ENCODE measurements at regions of chr7 and their contacts with region 1.

Region 1: GRCh38 chr7:83648464-83649241 is at the start of gene SEMA3E:
- DNase-seq: peak; percentile 52
- ATAC-seq: peak; percentile 82
- H3K4me3 ChIP-seq: peak within 1 kb of the TSS; percentile 75
- H3K27ac ChIP-seq: peak within 1 kb of the TSS; percentile 20; the same call in 1 of the 2 replicates
- H3K4me1 ChIP-seq: peaks cover 17% of the 10 kb centered on the region
- H3K27me3 ChIP-seq: no peaks in the 10 kb centered on the region
- CTCF ChIP-seq: peak; percentile 22; the same call in 1 of the 2 replicates
- total RNA-seq, gene SEMA3E: 3.6 and 5.9 TPM in 2 replicates

Region 2: DNA sequence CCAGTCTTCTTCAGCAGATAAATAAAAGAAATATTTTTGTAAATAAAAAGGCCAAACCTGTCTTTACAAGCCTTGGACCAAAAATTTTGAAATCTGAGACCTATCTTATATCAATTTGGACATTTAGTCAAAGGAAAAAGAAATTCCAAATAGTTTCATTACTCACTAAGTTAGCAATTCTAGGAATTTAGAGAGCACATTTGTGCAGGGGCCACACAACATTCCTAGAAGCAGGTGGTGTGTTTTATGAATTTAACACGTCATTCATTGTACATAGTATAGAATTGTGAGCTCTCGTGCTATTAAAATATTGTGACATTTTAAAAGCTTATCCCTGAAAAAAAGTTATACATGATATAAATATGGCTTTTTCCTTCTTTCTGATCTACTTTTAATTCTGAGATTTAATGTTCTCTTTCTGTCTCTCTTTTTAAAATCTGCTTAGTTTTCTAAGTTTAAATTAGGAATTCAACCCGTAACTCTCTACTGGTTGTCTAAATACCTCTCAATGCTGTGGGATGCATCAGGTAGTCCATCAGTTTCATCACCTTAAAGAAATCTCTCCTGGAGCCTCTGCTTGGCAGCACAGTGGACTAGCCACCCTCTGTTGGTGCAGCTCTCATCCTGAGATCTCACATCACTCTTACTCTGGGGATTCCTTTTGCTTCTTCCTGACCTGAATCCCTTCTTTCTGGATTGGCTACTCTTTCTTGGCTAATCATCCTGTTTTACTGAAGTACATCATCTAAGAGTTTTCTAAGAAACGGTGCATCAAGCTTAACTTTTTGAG is 124.2 kb before region 1 on chr7:
- CTCF ChIA-PET with region 1: no interaction called
- POLR2A ChIA-PET with region 1: no interaction called
- intact Hi-C with region 1: loop called (anchors 1 kb)
- DNase-seq: peak; percentile 85
- ATAC-seq: peak; percentile 97
- H3K4me3 ChIP-seq: no peak overlapping the region
- H3K27ac ChIP-seq: no peak overlapping the region
- H3K4me1 ChIP-seq: peaks cover 15% of the 10 kb centered on the region
- H3K27me3 ChIP-seq: no peaks in the 10 kb centered on the region
- CTCF ChIP-seq: no peak

Region 3: GRCh38 chr7:83532219-83532618 is 116.4 kb before region 1 on chr7:
- CTCF ChIA-PET with region 1: no interaction called
- POLR2A ChIA-PET with region 1: no interaction called
- intact Hi-C with region 1: loop called (anchors 5 kb)
- DNase-seq: peak; percentile 49
- ATAC-seq: peak; percentile 80
- H3K4me3 ChIP-seq: no peak overlapping the region
- H3K27ac ChIP-seq: no peak overlapping the region
- H3K4me1 ChIP-seq: peaks cover 14% of the 10 kb centered on the region
- H3K27me3 ChIP-seq: no peaks in the 10 kb centered on the region
- CTCF ChIP-seq: no peak

Region 4: DNA sequence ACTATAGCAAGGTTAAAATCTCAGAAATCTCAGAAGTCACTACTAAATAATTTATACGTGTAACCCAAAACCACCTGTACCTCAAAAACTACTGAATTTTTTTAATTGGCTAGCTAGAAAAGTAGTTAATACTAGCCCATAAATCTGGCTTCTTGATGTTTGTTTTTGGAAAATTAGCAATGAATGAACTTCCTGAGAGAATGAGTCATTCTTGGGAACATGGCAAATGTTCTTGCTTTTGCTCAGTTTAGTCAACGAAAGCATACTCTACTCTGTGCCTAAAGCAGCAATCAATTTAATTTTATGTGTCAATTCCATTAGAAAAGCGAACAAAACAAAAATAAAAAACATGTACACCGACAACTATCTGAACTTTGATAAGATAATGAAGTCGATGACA is 68.9 kb before region 1 on chr7:
- CTCF ChIA-PET with region 1: no interaction called
- POLR2A ChIA-PET with region 1: no interaction called
- intact Hi-C with region 1: loop called (anchors 2 kb)
- DNase-seq: peak; percentile 63
- ATAC-seq: peak; percentile 96
- H3K4me3 ChIP-seq: no peak overlapping the region
- H3K27ac ChIP-seq: no peak overlapping the region
- H3K4me1 ChIP-seq: peaks cover 14% of the 10 kb centered on the region
- H3K27me3 ChIP-seq: no peaks in the 10 kb centered on the region
- CTCF ChIP-seq: no peak

Measured in PC-3 (cell line).